Kidney (tissue), 22 donors: ENCODE measurements at regions of chr19 and their contacts with region 1.

Region 1: DNA sequence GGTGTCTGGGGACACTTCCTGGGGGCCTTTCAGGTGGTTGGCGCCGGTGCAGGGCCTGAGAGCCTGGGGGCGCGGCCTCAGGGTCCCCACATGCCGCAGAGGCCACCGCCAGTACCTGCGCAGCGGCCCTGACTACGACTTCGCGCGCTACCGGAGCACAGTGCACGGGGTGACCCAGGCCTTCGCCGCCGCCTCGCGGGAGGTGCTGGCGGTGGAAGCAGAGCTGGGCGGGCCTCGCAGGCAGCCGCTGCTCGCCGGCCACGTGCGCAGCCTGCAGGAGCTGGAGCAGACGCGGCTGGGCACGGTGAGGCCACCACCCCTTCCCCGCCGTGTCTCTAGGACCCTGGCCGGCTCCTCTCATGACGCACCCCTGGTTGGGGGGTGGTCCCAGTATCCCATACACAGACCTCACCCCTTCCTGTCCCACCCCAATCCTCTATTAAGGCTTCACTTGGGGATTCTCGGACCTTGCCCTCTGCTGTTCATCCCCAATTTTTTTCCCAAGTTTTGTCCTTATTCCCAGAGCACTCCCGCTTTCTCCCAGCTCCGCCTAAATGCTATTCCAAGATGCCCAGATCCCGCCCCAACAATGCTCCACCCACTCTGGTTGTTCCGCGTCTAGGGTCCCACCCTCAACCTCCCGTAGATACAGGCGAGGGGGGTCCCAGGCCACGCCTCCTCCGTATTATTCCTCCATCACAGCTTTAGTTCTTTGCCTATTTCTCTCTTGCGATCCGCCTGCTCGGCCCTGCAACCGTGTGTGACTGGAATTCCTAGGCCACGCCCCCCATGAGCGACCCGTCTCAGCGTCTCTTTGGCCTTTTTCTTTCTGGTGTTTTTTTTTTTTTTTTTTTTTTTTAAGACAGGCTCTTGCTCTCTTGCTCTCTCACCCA is 1.0 kb downstream of the REX1BD start:
- DNase-seq: peak; percentile 80 to 92 (median 88)
- H3K4me3 ChIP-seq: peak overlapping the region; percentile 66 to 73 (median 71)
- H3K27ac ChIP-seq: peak overlapping the region; percentile 68 to 87
- H3K4me1 ChIP-seq: peaks cover 0 to 16% (median 0%) of the 10 kb centered on the region in 3 donors
- H3K27me3 ChIP-seq: no peaks in the 10 kb centered on the region
- CTCF ChIP-seq: peak; percentile 22

Region 2: GRCh38 chr19:18328340-18329034 is 261.1 kb before region 1 on chr19:
- intact Hi-C with region 1: no loop called
- DNase-seq: peak; percentile 93 to 99 (median 95)
- H3K4me3 ChIP-seq: peak overlapping the region; percentile 36 to 61 (median 44)
- H3K27ac ChIP-seq: peak overlapping the region; percentile 27 to 56
- H3K4me1 ChIP-seq: peaks cover 2 to 18% (median 18%) of the 10 kb centered on the region in 3 donors
- H3K27me3 ChIP-seq: no peaks in the 10 kb centered on the region
- CTCF ChIP-seq: peak; percentile 98

Region 3: DNA sequence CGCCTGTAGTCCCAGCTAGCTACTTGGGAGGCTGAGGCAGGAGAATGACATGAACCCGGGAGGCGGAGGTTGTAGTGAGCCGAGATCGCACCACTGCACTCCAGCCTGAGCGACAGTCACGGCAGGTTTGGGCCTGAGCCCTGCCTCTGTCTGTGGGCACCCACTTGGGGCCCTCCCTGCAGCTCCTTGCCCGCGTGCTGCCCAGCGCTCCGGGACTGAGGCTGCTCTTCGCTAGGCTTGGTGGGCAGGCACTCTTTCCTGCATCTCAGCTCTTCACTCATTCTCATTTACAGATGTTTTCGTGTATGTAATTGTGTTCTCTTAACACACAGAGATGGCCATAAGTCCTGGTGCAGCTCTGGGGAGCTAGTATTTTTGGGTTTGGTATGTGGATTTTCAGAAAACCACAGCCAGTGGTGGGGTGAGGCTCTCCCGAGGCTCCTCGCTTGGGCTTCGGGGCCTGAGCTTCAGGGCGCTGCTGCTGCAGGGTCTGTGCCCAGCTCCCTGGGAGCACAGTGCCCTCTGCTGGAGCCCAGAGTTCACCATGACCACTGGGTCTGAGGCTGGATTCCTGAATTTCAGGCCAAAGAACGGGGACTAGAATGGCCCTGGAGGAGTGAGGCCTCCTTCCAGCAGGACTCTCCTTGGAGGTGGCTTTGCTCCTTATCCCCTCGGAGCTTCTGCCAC is 257.4 kb after region 1 on chr19:
- intact Hi-C with region 1: loop called (anchors 10 kb)
- DNase-seq: peak; percentile 79 to 91 (median 84)
- H3K4me3 ChIP-seq: no peak overlapping the region
- H3K27ac ChIP-seq: peak overlapping the region in 1 of 2 donors; percentile 51
- H3K4me1 ChIP-seq: peaks cover 0 to 49% (median 37%) of the 10 kb centered on the region in 3 donors
- H3K27me3 ChIP-seq: no peaks in the 10 kb centered on the region
- CTCF ChIP-seq: peak; percentile 84

Region 4: DNA sequence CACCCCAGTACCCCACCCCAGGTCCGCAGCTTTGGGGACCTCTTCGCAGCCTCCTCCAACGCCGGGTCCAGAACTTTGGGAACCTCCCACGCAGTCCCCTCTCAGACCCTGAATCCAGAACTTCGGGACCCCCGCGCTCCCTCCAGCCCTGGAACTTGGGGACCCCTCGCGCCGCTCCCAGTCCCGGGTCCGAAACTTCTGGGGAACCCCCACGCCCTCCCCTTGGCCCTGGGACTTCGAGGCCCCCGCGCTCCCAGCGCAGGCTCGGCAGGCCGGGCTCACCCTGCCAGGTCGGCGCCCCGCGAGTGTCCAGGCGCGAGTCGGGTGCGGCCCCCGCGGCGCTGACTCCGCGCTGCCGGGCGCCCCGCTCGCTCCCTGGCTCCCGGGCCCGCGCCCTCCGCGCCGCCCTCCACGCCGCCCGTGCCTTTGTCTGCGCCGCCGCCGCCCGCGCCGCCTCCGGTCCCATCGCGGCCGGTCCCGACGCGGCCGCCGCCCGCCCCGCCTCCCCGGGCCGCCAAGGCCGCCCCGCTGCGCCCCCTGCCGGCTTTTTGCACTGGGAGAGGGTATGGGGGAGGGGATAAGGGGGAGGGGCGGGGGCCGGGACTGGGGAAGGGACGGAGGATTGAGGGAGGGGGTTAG is 351.3 kb after region 1 on chr19 and contains the start of gene HOMER3:
- intact Hi-C with region 1: no loop called
- DNase-seq: peak; percentile 82 to 91 (median 89)
- H3K4me3 ChIP-seq: peak within 1 kb of the TSS; percentile 51 to 69 (median 56)
- H3K27ac ChIP-seq: peak within 1 kb of the TSS in 1 of 2 donors; percentile 32
- H3K4me1 ChIP-seq: peaks cover 0 to 4% (median 3%) of the 10 kb centered on the region in 3 donors
- H3K27me3 ChIP-seq: no peaks in the 10 kb centered on the region
- CTCF ChIP-seq: no peak
- total RNA-seq, gene HOMER3: 34.3 TPM